Calu3 (cell line): ENCODE measurements at regions of chr18 and their contacts with region 1.

Region 1: GRCh38 chr18:50853863-50854271 is 25.1 kb upstream of the ME2 start:
- DNase-seq: peak; percentile 42
- H3K4me3 Mint-ChIP-seq: peak overlapping the region; percentile 13
- H3K27ac Mint-ChIP-seq: peak overlapping the region; percentile 50
- H3K4me1 Mint-ChIP-seq: peaks cover 53% of the 10 kb centered on the region
- H3K27me3 Mint-ChIP-seq: no peaks in the 10 kb centered on the region
- CTCF ChIP-seq: no peak

Region 2: DNA sequence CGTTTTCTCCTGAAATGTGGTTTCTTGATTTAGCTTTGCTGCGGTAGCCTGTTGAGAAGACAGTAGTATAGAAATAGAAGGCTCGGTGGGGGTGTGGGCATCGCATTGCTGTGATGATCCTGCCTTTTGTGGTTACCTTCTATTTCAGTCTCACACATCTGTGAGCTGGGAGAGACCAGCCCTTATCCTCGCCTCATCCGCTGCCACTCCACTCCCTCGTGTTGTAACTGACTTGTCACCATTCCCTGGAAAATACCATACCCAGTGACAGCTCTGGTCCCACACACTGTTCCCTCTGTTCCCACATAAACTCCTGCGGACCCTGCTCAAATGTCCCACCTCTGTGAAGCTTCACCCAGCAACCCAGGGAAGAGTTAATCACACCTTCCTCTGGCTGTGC is 179.6 kb before region 1 on chr18:
- CTCF ChIA-PET with region 1: no interaction called
- intact Hi-C with region 1: no loop called
- DNase-seq: no peak
- H3K4me3 Mint-ChIP-seq: no peak overlapping the region
- H3K27ac Mint-ChIP-seq: no peak overlapping the region
- H3K4me1 Mint-ChIP-seq: no peaks in the 10 kb centered on the region
- H3K27me3 Mint-ChIP-seq: peaks cover 94% of the 10 kb centered on the region
- CTCF ChIP-seq: no peak

Region 3: GRCh38 chr18:50791599-50792438 is 62.0 kb before region 1 on chr18:
- CTCF ChIA-PET with region 1: no interaction called
- intact Hi-C with region 1: no loop called
- DNase-seq: no peak
- H3K4me3 Mint-ChIP-seq: no peak overlapping the region
- H3K27ac Mint-ChIP-seq: no peak overlapping the region
- H3K4me1 Mint-ChIP-seq: peaks cover 17% of the 10 kb centered on the region
- H3K27me3 Mint-ChIP-seq: peaks cover 23% of the 10 kb centered on the region
- CTCF ChIP-seq: no peak

Region 4: DNA sequence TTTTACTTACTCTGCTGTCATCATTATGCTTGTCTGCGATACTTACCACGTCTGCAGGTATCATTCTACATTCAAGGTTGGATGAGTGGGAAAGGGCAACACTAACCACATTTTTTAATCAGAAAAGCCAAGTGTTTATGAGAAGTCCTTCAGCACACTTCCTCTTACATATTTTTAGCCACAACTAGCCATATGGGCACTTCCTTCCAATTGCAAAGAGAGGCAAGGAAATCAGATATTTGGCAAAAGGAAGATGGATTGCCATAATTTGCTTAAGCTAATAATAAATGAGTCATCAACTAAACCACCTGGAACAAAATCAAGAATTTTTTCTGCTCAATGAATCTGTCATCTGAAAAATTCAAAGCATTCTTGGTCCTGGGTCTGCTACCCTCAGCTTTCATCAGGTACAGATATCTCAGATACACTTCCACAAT is 17.3 kb before region 1 on chr18:
- CTCF ChIA-PET with region 1: interaction called, 6 read pairs
- intact Hi-C with region 1: loop called (anchors 2 kb)
- DNase-seq: peak; percentile 51
- H3K4me3 Mint-ChIP-seq: no peak overlapping the region
- H3K27ac Mint-ChIP-seq: peak overlapping the region; percentile 87
- H3K4me1 Mint-ChIP-seq: peaks cover 42% of the 10 kb centered on the region
- H3K27me3 Mint-ChIP-seq: no peaks in the 10 kb centered on the region
- CTCF ChIP-seq: no peak